CD4-positive, alpha-beta memory T cell (primary cell): ENCODE measurements at regions of chr16 and their contacts with region 1.

Region 1: DNA sequence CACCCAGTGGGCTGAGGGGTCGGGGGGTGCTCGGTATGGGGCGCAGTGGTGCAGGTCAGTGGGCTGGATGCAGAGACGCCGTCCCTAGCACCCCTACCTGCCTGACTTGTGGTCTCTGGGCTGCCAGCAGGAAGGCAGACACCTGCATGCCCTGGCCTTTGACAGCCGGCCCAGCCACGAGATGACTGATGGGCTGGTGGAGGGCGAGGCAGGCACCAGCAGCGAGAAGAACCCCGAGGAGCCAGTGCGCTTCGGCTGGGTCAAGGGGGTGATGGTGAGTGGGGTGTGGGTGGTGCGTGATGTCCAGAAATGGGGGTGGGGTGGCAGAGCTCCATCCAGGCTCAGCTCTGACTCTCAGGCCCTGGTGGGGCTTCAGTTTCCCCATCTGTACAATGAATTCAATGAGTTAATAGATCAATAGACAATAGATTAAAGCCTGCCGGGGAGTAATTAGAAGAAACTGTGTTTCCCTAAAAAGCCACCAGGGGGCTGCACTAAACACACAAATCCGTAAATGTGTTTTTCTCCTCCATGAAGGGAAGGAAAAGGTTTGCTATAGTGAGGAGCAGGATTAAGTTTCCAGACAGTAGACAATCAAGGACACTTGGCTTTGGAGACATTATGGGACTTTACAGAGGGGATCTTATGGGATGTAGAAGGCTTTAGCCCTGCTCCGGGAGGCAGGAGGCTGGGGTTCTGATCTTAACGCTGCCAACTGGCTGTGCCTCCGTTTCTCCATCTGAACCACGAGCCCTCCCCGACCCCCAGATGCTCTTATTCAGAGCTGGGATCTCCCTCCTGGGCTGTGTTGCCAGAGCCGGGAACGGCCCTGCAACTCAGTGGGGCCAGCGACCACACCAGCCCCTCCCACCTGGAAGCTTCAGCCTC is 2.2 kb downstream of the SLC12A3 start:
- DNase-seq: peak in 4 of 5 donors; percentile 50 to 56 (median 56)
- H3K4me3 ChIP-seq: no peak overlapping the region
- H3K4me3 Mint-ChIP-seq: peak overlapping the region in 1 of 8 donors; percentile 49
- H3K27ac ChIP-seq: no peak overlapping the region
- H3K27ac Mint-ChIP-seq: peak overlapping the region in 5 of 7 donors; percentile 1 to 72 (median 30)
- H3K4me1 ChIP-seq: peaks cover 22% of the 10 kb centered on the region
- H3K4me1 Mint-ChIP-seq: peaks cover 14 to 24% (median 18%) of the 10 kb centered on the region in 4 donors
- H3K27me3 ChIP-seq: no peaks in the 10 kb centered on the region
- H3K27me3 Mint-ChIP-seq: no peaks in the 10 kb centered on the region

Region 2: GRCh38 chr16:56708525-56709442 is 158.4 kb before region 1 on chr16:
- CTCF ChIA-PET with region 1: no interaction called
- POLR2A ChIA-PET with region 1: no interaction called
- intact Hi-C with region 1: no loop called
- DNase-seq: peak in 3 of 5 donors; percentile 11 to 27 (median 22)
- H3K4me3 ChIP-seq: peak overlapping the region in 1 of 2 donors; percentile 29
- H3K4me3 Mint-ChIP-seq: peak overlapping the region; percentile 56 to 82 (median 62)
- H3K27ac ChIP-seq: no peak overlapping the region
- H3K27ac Mint-ChIP-seq: peak overlapping the region in 6 of 7 donors; percentile 54 to 74 (median 64)
- H3K4me1 ChIP-seq: peaks cover 20% of the 10 kb centered on the region
- H3K4me1 Mint-ChIP-seq: peaks cover 12 to 23% (median 15%) of the 10 kb centered on the region in 4 donors
- H3K27me3 ChIP-seq: no peaks in the 10 kb centered on the region
- H3K27me3 Mint-ChIP-seq: no peaks in the 10 kb centered on the region

Region 3: DNA sequence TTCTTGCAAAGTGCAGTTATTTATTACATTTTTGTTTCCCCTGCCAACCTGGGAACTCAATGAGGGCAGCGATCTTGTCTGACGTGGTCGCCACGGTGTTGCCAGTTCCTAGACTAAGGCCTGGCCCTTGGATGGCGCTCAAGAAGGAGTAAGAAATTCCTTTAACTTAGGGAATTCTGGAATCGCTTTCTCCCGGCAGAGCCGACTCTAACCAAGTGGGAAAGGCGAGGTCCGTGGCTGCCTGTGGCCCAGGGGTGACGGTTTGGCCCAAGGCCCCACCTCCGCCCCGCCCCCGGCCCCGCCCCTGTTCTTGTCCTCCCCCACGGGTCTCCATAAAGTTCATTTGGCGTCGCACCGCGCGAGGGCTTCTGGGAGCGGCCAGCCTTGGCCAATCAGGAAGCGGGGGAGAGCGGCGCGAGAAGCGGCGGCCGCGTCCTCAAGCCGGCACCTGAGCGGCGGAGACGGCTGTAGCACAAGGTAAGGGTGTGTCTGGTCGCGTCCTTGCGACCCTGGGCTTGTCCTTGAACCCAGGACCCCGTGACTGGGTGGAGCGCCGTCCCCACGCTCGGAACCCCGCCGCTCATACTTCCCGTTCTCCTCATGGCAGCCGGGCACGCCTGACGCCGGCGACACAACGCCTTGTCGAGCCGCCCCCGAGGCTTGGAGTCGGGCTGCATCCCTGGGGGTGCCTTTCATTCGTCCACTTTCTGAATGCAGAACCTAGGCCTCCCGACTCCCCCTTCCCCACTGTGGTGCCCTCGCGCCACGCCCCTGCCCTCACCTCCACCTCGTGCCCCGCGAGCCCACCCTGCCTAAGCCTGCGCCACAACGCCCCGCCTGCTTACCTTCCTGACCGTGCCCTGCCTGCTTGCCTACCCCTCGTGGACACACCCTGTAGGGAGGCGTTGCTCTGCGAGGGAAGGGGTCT is 137.2 kb before region 1 on chr16 and contains the start of gene NUP93:
- CTCF ChIA-PET with region 1: no interaction called
- POLR2A ChIA-PET with region 1: no interaction called
- intact Hi-C with region 1: loop called (anchors 5 kb)
- DNase-seq: peak; percentile 87 to 92 (median 89)
- H3K4me3 ChIP-seq: peak within 1 kb of the TSS; percentile 76 to 81
- H3K4me3 Mint-ChIP-seq: peak within 1 kb of the TSS in 4 of 8 donors; percentile 85 to 95 (median 93)
- H3K27ac ChIP-seq: peak within 1 kb of the TSS; percentile 70
- H3K27ac Mint-ChIP-seq: peak within 1 kb of the TSS in 6 of 7 donors; percentile 82 to 98 (median 96)
- H3K4me1 ChIP-seq: peaks cover 35% of the 10 kb centered on the region
- H3K4me1 Mint-ChIP-seq: peaks cover 13 to 36% (median 14%) of the 10 kb centered on the region in 4 donors
- H3K27me3 ChIP-seq: no peaks in the 10 kb centered on the region
- H3K27me3 Mint-ChIP-seq: no peaks in the 10 kb centered on the region
- total RNA-seq, gene NUP93: 48.0 to 56.5 TPM

Region 4: GRCh38 chr16:56879276-56879675 is 12.1 kb after region 1 on chr16:
- CTCF ChIA-PET with region 1: interaction called, 12 read pairs
- POLR2A ChIA-PET with region 1: no interaction called
- intact Hi-C with region 1: no loop called
- DNase-seq: no peak
- H3K4me3 ChIP-seq: no peak overlapping the region
- H3K4me3 Mint-ChIP-seq: no peak overlapping the region
- H3K27ac ChIP-seq: no peak overlapping the region
- H3K27ac Mint-ChIP-seq: no peak overlapping the region
- H3K4me1 ChIP-seq: no peaks in the 10 kb centered on the region
- H3K4me1 Mint-ChIP-seq: no peaks in the 10 kb centered on the region
- H3K27me3 ChIP-seq: no peaks in the 10 kb centered on the region
- H3K27me3 Mint-ChIP-seq: no peaks in the 10 kb centered on the region

Region 5: GRCh38 chr16:56944954-56945839 is 78.0 kb after region 1 on chr16:
- CTCF ChIA-PET with region 1: interaction called, 113 read pairs
- POLR2A ChIA-PET with region 1: interaction called, 3 read pairs
- intact Hi-C with region 1: no loop called
- DNase-seq: no peak
- H3K4me3 ChIP-seq: no peak overlapping the region
- H3K4me3 Mint-ChIP-seq: no peak overlapping the region
- H3K27ac ChIP-seq: no peak overlapping the region
- H3K27ac Mint-ChIP-seq: peak overlapping the region in 6 of 7 donors; percentile 9 to 85 (median 52)
- H3K4me1 ChIP-seq: no peaks in the 10 kb centered on the region
- H3K4me1 Mint-ChIP-seq: peaks cover 3 to 14% (median 8%) of the 10 kb centered on the region in 4 donors
- H3K27me3 ChIP-seq: no peaks in the 10 kb centered on the region
- H3K27me3 Mint-ChIP-seq: no peaks in the 10 kb centered on the region

Region 6: DNA sequence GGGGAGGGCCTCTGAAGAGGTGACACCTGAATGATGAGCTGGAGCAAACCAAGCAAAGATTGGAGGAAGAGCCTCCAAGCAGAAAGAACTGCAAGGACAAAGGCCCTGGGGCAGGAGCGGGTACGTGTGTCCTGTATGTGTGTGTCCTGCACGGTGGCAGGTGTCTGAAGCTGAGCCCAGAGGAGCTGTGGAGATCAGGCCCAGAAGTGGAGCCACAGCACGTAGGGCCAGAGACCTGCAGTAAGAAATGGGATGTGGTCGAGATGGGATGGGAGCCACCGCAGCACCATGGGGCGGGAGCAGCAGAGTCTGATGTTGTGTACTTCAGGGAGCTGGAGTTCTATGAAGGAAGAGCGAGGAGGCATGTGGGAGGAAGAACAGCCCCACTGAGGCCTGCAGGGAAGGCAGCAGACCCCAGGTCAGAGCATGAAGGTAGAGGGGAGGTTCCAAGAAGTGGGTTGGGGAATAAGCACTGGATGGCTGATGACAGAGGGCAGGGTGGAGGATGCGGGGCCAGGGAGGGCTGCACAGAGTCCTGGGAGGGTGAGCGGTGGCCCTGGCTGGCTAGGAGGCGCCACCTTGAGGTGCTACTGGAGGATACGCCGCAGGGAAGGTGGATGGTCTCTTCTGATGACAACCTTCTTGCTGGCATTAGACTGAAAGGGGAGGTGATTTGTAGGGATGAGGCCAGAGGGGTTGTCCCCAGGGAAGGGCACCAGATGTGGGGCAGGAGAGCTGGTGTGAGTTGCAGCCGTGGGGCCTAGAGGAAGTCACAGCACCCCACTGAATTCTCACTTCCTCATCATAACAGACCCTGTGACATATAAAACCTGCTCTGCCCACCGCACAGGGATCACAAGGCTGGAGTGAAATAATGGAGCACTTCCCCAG is 83.9 kb after region 1 on chr16:
- CTCF ChIA-PET with region 1: interaction called, 113 read pairs
- POLR2A ChIA-PET with region 1: interaction called, 3 read pairs
- intact Hi-C with region 1: no loop called
- DNase-seq: peak; percentile 39 to 57 (median 43)
- H3K4me3 ChIP-seq: no peak overlapping the region
- H3K4me3 Mint-ChIP-seq: no peak overlapping the region
- H3K27ac ChIP-seq: no peak overlapping the region
- H3K27ac Mint-ChIP-seq: peak overlapping the region; percentile 11 to 70 (median 25)
- H3K4me1 ChIP-seq: no peaks in the 10 kb centered on the region
- H3K4me1 Mint-ChIP-seq: peaks cover 5 to 13% (median 8%) of the 10 kb centered on the region in 4 donors
- H3K27me3 ChIP-seq: no peaks in the 10 kb centered on the region
- H3K27me3 Mint-ChIP-seq: no peaks in the 10 kb centered on the region

Region 7: DNA sequence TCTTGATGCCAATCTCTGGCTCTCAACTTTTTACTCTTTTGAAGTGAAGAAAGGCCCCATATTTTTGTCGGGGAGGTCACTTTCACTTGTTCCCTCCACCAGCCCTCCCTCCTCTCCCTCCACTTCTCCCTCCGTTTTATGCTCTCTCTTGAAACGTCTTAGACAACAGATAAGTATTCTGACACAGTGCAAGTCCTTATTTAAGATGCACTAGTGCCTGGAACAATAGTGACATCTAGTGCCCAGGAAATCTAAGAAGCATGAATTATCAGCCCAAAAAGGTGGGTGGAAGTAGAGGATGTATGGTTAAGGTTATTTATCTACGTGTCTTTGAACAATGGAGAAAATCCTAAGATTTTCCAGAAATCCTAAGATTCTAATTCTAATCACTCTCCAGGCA is 300.8 kb after region 1 on chr16:
- CTCF ChIA-PET with region 1: no interaction called
- POLR2A ChIA-PET with region 1: no interaction called
- intact Hi-C with region 1: loop called (anchors 1 kb)
- DNase-seq: peak; percentile 52 to 72 (median 65)
- H3K4me3 ChIP-seq: no peak overlapping the region
- H3K4me3 Mint-ChIP-seq: no peak overlapping the region
- H3K27ac ChIP-seq: no peak overlapping the region
- H3K27ac Mint-ChIP-seq: peak overlapping the region in 2 of 7 donors; percentile 26 to 32
- H3K4me1 ChIP-seq: peaks cover 5% of the 10 kb centered on the region
- H3K4me1 Mint-ChIP-seq: peaks cover 9 to 16% (median 11%) of the 10 kb centered on the region in 4 donors
- H3K27me3 ChIP-seq: no peaks in the 10 kb centered on the region
- H3K27me3 Mint-ChIP-seq: no peaks in the 10 kb centered on the region